ENCODE measurements at regions of chr9 and their contacts with region 1.

Region 1: DNA sequence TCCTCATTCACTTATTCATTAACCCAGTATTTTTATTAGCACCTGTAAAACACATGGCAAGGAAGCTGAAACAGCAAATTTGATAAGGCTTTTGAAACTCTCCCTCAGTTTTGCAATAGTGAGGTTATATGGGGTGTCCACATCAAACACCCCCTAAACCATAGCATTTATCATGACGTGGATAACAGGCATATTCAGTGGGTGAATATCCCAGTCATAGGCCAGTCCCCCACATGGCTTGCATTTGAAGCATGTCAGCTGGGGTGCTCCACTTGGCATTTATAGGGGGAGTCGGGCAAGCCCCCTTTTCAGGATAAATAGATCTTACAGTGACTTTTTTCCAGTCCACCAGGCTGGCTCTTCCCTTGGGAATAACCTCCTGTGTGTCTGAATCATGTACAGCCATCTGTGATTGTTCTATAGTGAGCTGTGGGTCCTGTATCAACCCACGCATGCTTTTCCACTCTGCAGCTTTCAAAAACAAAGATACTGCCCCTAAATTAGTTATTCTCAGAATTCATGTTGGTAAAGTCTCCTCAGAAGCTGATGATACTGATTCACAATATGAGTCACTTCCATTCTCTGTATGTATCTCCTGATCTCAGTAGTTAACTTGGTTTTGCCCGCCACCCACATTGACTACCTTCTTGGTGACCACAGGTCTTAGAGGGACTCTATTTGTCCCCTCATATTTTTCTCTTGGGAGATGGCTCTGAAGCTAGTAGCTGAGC is 84.4 kb upstream of the SPIN1 start:
- DNase-seq: peak; percentile 93
- ATAC-seq: peak; percentile 91
- H3K4me3 Mint-ChIP-seq: peak overlapping the region; percentile 52
- H3K27ac Mint-ChIP-seq: peak overlapping the region; percentile 94
- H3K4me1 Mint-ChIP-seq: peaks cover 45% of the 10 kb centered on the region
- H3K27me3 Mint-ChIP-seq: peaks cover 23% of the 10 kb centered on the region

Region 2: DNA sequence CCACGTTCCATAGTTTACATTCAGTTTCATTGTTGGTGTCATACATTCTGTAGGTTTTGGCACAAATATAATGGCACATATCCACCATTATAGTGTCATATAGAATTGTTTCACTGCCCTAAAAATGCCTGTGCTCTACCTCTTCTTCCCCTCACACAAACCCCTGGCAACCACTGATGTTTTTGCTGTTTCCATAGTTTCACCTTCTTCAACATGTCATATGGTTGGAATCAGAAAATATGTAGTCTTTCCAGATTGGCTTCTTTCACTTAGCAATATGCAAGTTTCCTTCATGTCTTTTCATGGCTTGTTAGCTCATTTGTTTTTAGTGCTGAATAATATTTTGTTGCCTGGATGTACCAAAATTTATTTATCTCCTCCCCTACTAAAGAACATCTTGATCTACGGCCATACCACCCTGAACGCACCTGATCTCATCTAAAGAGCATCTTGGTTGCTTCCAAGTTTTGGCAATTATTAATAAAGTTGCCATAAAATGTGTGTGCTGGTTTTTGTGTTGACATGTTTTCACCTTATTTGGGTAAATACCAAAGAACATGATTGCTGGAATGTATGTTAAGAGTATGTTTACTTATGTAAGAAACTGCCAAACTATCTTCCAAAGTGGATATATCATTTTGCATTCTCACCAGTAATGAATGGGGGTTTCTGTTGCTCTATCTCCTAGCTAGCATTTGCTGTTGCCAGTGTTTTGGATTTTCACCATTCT is 312.6 kb before region 1 on chr9:
- CTCF ChIA-PET with region 1: no interaction called
- DNase-seq: no peak
- ATAC-seq: no peak
- H3K4me3 Mint-ChIP-seq: no peak overlapping the region
- H3K27ac Mint-ChIP-seq: no peak overlapping the region
- H3K4me1 Mint-ChIP-seq: no peaks in the 10 kb centered on the region
- H3K27me3 Mint-ChIP-seq: peaks cover 25% of the 10 kb centered on the region

Region 3: GRCh38 chr9:88322906-88323566 is 19.1 kb after region 1 on chr9:
- CTCF ChIA-PET with region 1: interaction called, 16 read pairs
- DNase-seq: peak; percentile 89
- ATAC-seq: peak; percentile 99
- H3K4me3 Mint-ChIP-seq: peak overlapping the region; percentile 38
- H3K27ac Mint-ChIP-seq: peak overlapping the region; percentile 93
- H3K4me1 Mint-ChIP-seq: peaks cover 54% of the 10 kb centered on the region
- H3K27me3 Mint-ChIP-seq: peaks cover 4% of the 10 kb centered on the region

Region 4: DNA sequence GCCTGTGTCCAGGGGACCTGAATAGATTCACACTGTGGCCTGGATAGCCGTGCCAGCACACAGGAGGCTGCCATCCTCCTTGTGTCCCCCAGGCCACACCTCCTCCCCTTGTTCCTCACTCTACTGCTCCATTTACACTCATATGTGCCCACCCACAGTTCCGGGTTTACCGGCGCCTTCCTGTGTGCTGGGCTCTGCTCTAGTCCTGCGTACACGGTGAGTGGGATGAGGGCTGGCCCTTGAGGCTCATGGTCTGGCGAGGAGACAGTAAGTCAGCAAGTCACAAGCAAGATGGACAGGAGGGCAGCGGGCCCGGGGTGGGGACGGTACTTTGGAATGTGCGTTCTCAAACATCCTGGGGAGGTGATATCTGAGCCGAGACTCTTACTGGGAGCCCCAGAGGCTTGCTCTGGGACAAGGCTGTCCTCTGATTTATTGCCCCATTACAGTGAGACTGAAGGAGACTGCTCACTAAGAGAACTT is 198.7 kb after region 1 on chr9:
- CTCF ChIA-PET with region 1: no interaction called
- DNase-seq: no peak
- ATAC-seq: no peak
- H3K4me3 Mint-ChIP-seq: no peak overlapping the region
- H3K27ac Mint-ChIP-seq: no peak overlapping the region
- H3K4me1 Mint-ChIP-seq: peaks cover 2% of the 10 kb centered on the region
- H3K27me3 Mint-ChIP-seq: peaks cover 5% of the 10 kb centered on the region

Measured in activated CD8-positive, alpha-beta memory T cell treated with anti-CD3 and anti-CD28 coated beads, Interleukin-2, amount 10 ng/mL, durations not matched to agents 7 days and 5 days (primary cell).